ENCODE measurements at regions of chr14 and their contacts with region 1.

Region 1: DNA sequence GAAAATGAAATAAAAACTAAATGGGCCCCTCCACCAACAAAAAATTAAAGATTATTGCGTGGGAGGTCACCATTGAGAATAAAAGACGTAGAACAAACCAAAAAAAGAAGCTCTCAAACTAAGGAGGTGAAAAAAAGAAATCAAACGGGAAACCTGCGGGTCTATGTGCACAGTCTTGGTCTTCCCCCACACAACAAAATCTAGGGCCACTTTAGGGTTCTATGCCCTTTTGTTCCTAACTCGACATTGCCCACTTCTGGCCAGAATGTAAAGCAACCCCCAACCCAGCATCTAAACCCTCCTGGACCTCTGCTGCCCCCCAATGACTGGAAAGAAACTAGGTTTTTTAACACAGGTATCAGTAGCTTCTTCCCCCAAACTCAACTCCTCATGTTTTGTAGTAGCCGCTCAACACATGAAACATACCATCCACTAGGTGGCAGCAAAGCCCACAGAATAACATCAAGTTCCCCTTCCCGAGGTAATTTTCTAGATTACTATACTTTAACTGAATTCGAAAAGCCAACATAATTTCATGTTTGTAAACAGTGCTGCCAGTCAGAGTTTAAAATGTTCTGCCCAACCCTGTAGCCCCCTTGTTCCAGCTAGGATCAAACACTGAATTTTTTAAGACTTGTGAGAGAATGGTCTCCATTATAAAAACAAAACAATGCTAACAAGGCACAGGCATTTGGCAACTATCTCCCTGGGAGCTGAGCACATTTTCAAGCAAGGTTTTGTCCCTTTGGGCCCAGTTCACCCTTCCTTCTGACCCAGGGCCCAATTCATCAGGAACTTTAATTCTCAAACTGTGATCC is 18.7 kb downstream of the DAD1 start:
- DNase-seq: peak; percentile 79
- ATAC-seq: peak; percentile 87
- H3K4me3 ChIP-seq: no peak overlapping the region
- H3K27ac ChIP-seq: peak overlapping the region; percentile 48; the same call in 1 of the 2 replicates
- H3K4me1 ChIP-seq: peaks cover 6 to 24% of the 10 kb centered on the region in 2 experiments; a peak in 2 of 4 replicates
- H3K27me3 ChIP-seq: no peaks in the 10 kb centered on the region
- CTCF ChIP-seq: peak; percentile 77 to 94 (median 92)
- POLR2A ChIP-seq: no peak
- RAD21 ChIP-seq: peak; percentile 84

Region 2: DNA sequence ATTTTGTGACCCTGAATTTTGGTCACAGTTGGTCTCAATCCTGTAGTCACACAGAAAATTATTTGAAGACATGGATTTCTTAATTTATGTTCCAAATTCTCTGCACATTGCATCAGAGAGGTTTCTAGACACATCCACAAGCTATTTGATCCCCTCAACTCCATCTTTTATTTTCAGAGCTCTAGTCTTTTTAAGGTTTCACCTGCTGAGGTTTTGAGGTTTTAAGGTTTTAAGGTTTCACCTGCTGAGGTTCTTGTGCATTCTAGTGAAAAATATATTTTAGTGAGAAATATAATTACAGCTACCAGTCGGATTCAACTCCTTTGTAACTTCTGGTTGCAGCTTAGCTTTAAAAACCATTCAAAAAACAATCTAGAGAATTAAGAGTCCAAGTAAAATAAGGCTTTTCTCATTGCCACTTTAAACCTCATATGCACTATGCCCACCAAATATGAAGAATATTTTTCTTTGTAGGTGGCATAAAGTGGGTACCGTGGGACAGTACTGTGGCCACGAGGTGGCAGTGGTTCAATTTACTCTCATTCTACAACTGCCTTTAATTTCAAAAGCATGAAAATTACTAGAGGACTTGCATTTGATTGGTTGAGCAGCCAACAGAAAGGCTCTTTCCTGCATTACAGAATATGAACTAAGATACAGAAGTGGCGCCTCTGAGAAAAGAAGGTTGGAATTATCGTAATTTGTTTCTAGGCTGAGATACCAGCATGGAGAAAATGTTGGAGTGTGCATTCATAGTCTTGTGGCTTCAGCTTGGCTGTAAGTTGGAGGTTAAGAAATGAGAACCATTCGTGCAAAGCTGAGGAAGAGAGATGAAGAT is 530.2 kb before region 1 on chr14:
- CTCF ChIA-PET with region 1: no interaction called
- POLR2A ChIA-PET with region 1: no interaction called
- RAD21 ChIA-PET with region 1: no interaction called
- intact Hi-C with region 1: no loop called
- DNase-seq: peak; percentile 18
- ATAC-seq: peak; percentile 84
- H3K4me3 ChIP-seq: no peak overlapping the region
- H3K27ac ChIP-seq: no peak overlapping the region
- H3K4me1 ChIP-seq: no peaks in the 10 kb centered on the region
- H3K27me3 ChIP-seq: peaks cover 40% of the 10 kb centered on the region
- CTCF ChIP-seq: peak in 2 of 3 experiments; percentile 61 to 70; a peak in 4 of 6 replicates
- POLR2A ChIP-seq: no peak
- RAD21 ChIP-seq: peak; percentile 9; the same call in 1 of the 2 replicates

Region 3: GRCh38 chr14:22556990-22557623 is 13.2 kb before region 1 on chr14:
- CTCF ChIA-PET with region 1: interaction called, 33 read pairs
- POLR2A ChIA-PET with region 1: no interaction called
- RAD21 ChIA-PET with region 1: no interaction called
- intact Hi-C with region 1: no loop called
- DNase-seq: peak; percentile 48
- ATAC-seq: peak; percentile 92
- H3K4me3 ChIP-seq: 0 out of 4 replicates have a peak overlapping the region, but pooled peaks of 1 of the 2 experiments have one; percentile 23
- H3K27ac ChIP-seq: no peak overlapping the region
- H3K4me1 ChIP-seq: peaks cover 5 to 24% of the 10 kb centered on the region in 2 experiments
- H3K27me3 ChIP-seq: no peaks in the 10 kb centered on the region
- CTCF ChIP-seq: peak; percentile 95 to 100 (median 99)
- POLR2A ChIP-seq: no peak
- RAD21 ChIP-seq: peak; percentile 96

Region 4: DNA sequence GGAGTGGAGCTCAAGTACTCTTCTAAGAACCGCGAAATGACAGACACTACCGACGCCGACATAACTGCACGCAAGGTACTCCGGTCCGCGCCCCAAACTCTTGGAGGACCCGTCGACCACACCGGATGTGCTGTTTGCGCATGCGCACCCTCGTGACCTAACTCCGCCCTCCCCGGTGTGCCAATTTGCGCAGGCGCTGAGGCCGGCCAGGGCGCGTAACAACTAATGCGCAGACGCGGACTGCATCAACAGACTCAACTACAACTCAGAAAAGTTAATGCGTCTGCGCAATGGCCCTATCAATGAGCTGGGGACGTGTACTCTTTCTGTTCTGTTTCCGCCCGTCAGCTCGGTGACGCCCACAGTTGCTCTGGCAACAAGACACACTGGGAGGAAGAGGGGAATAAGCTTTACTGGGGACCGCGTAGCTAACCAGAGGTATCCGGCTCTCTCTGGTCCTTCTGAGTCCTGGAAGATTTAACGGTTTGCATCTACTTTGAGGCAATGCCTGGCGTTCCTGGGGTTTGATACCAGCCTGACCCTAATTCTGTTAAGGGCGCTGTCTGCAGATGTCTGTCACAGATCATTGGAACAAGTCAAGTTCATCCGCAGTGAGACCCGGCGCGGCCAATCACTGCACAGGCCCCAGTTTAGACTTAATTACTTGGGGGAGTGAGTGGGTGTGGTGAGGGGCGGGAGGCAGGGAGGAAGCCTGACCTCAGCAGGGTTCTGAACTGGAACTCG is 18.9 kb after region 1 on chr14 and contains the start of gene DAD1:
- CTCF ChIA-PET with region 1: interaction called, 37 read pairs
- POLR2A ChIA-PET with region 1: interaction called, 7 read pairs
- RAD21 ChIA-PET with region 1: interaction called in 1 of 2 experiments, 4 read pairs
- intact Hi-C with region 1: no loop called
- DNase-seq: peak; percentile 98
- ATAC-seq: peak; percentile 94
- H3K4me3 ChIP-seq: peak within 1 kb of the TSS; percentile 71 to 93
- H3K27ac ChIP-seq: peak within 1 kb of the TSS; percentile 69
- H3K4me1 ChIP-seq: peaks cover 10 to 22% of the 10 kb centered on the region in 2 experiments
- H3K27me3 ChIP-seq: 0 out of 2 replicates have a peak, but pooled peaks cover 6% of the 10 kb centered on the region
- CTCF ChIP-seq: no peak
- POLR2A ChIP-seq: peak; percentile 94
- RAD21 ChIP-seq: no peak
- total RNA-seq, gene DAD1: 162 TPM

Region 5: DNA sequence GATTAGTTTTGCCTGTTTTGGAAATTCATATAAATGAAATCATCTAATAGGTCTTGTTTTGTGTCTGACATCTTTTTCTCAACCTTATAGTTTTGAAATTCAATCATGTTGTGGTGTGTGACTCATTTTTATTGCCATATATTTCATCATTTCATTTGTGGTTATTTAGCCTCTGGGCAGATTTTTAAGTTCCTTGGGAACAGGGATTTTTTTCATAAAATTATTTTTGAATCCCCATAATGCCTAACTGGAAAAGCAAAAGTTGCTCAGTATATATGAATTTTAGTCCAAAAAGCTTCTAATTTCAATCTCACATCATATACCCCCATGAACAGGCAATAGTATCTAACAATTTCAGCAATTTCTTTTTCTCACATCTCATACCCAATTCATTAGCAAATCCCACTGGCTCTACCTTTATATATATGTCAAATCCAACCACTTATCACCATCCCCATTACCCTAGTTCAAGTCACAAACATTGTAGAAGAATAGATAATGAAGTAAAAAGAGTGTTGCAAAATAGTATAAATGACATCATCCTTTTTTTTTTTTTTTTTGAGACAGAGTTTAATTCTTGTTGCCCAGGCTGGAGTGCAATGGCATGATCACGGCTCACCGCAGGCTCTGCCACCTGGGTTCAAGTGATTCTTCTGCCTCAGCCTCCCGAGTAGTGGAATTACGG is 76.4 kb after region 1 on chr14:
- CTCF ChIA-PET with region 1: interaction called, 93 read pairs
- POLR2A ChIA-PET with region 1: interaction called, 18 read pairs
- RAD21 ChIA-PET with region 1: no interaction called
- intact Hi-C with region 1: no loop called
- DNase-seq: no peak
- ATAC-seq: no peak
- H3K4me3 ChIP-seq: no peak overlapping the region
- H3K27ac ChIP-seq: no peak overlapping the region
- H3K4me1 ChIP-seq: peaks cover 5 to 17% of the 10 kb centered on the region in 2 experiments; a peak in 2 of 4 replicates
- H3K27me3 ChIP-seq: no peaks in the 10 kb centered on the region
- CTCF ChIP-seq: no peak
- POLR2A ChIP-seq: no peak
- RAD21 ChIP-seq: no peak

Region 6: DNA sequence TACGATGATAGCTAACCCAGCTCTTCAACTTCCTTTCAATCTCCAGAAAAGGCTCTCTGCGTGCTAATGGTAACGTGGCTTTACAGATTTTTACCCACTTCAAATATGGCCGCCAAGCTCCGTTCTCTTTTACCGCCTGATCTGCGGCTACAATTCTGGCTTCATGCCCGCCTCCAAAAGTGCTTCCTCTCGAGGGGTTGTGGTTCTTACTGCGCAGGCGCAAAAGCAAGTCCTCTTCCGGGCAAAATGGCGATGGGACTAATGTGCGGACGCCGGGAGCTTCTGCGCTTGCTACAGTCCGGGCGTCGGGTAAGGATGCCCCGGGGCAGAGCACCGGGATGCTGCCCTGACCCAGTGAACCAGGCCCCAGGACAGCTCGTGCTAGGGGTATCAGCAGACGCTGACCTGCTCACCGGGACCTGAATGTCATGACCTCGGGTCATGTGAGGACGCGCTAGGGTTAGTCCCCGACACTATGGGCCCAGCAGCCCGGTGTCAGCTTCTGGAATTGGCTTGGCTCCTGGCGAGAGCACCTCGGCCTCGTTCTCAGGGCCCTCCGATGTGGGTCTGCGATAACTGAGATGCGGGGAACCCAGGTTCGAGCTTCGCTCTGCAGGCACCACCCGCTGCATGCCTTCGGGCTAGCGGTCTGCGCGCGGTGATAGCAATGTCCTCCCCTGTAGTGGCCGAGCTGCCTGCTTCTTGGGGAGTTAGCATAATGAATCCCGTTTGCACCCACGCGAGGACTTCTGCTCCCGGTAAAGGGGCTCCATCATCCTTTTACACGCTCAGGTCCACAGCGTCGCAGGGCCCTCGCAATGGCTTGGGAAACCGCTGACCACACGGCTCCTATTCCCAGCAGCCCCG is 196.3 kb after region 1 on chr14 and contains the start of gene OXA1L:
- CTCF ChIA-PET with region 1: interaction called, 9 read pairs
- POLR2A ChIA-PET with region 1: no interaction called
- RAD21 ChIA-PET with region 1: no interaction called
- intact Hi-C with region 1: loop called (anchors 5 kb)
- DNase-seq: peak; percentile 95
- ATAC-seq: peak; percentile 80
- H3K4me3 ChIP-seq: peak within 1 kb of the TSS; percentile 87 to 96
- H3K27ac ChIP-seq: peak within 1 kb of the TSS; percentile 71
- H3K4me1 ChIP-seq: peaks cover 4 to 19% of the 10 kb centered on the region in 2 experiments; a peak in 3 of 4 replicates
- H3K27me3 ChIP-seq: no peaks in the 10 kb centered on the region
- CTCF ChIP-seq: no peak
- POLR2A ChIP-seq: peak; percentile 95
- RAD21 ChIP-seq: no peak
- total RNA-seq, gene OXA1L: 146 TPM